ENCODE measurements at regions of chr6 and their contacts with region 1.

Region 1: DNA sequence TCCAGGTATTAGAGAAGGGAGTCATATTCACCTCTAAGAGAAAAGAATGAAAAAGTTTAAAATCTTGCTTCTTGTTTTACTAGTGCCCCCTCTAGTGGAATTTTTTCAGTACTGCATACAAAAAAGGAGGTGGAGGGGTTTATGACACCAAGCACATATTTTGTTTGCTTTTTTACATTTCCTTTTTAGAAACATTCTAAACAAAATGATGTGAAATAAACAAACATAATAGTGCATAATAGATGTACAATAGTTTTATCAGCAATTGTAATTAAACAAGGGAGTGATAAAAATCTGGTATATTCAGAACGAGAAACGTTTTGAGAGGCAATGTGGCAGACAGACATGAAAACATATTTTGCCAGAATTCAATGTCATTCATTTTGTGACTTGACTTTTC is 111.0 kb upstream of the TFAP2D start:
- DNase-seq: no peak
- H3K4me3 ChIP-seq: no peak overlapping the region
- H3K27ac ChIP-seq: no peak overlapping the region
- H3K4me1 ChIP-seq: no peaks in the 10 kb centered on the region
- H3K27me3 ChIP-seq: no peaks in the 10 kb centered on the region
- CTCF ChIP-seq: peak in 5 of 6 experiments; percentile 21 to 73 (median 48)
- POLR2A ChIP-seq: no peak

Region 2: DNA sequence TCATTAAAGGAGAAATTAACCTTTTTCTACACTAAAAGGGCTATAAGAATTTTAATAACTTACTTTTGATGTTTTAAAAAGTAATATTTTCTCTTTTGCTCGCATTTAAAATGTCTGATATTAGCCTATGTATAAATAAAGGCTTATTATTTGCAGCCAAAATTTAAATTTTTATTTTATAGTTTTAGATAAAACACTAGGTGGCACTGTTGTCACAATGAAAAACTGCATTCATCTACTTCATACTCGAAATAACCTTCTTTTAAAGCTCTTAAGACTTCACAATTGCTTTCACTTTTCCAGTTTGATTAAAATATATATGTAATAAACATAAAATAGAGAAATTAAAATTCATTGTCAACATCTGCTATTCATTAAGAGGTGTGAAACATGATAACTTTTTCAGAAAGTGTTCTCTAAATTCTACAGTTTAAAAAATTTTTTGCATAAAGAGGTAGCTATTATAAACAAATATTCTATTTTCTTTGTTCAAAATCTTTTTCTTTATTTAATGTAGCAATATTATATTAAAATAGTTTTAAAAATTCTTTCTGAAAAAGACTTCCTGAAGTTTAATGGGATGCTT is 473.8 kb before region 1 on chr6:
- intact Hi-C with region 1: loop called (anchors 10 kb)
- DNase-seq: no peak
- H3K4me3 ChIP-seq: no peak overlapping the region
- H3K27ac ChIP-seq: no peak overlapping the region
- H3K4me1 ChIP-seq: no peaks in the 10 kb centered on the region
- H3K27me3 ChIP-seq: no peaks in the 10 kb centered on the region
- CTCF ChIP-seq: peak in 5 of 6 experiments; percentile 14 to 60 (median 29)
- POLR2A ChIP-seq: no peak

Measured in thyroid gland (tissue), 4 donors.